CD4-positive, alpha-beta memory T cell (primary cell): ENCODE measurements at regions of chr10 and their contacts with region 1.

Region 1: GRCh38 chr10:67849331-67850011 is 11.5 kb upstream of the DNAJC12 start:
- DNase-seq: peak; percentile 87 to 93 (median 90)
- H3K4me3 ChIP-seq: peak overlapping the region; percentile 70 to 98
- H3K4me3 Mint-ChIP-seq: peak overlapping the region; percentile 90 to 99 (median 96)
- H3K27ac ChIP-seq: peak overlapping the region; percentile 85
- H3K27ac Mint-ChIP-seq: peak overlapping the region; percentile 85 to 99 (median 97)
- H3K4me1 ChIP-seq: peaks cover 8% of the 10 kb centered on the region
- H3K4me1 Mint-ChIP-seq: peaks cover 2 to 17% (median 7%) of the 10 kb centered on the region in 4 donors
- H3K27me3 ChIP-seq: no peaks in the 10 kb centered on the region
- H3K27me3 Mint-ChIP-seq: no peaks in the 10 kb centered on the region

Region 2: DNA sequence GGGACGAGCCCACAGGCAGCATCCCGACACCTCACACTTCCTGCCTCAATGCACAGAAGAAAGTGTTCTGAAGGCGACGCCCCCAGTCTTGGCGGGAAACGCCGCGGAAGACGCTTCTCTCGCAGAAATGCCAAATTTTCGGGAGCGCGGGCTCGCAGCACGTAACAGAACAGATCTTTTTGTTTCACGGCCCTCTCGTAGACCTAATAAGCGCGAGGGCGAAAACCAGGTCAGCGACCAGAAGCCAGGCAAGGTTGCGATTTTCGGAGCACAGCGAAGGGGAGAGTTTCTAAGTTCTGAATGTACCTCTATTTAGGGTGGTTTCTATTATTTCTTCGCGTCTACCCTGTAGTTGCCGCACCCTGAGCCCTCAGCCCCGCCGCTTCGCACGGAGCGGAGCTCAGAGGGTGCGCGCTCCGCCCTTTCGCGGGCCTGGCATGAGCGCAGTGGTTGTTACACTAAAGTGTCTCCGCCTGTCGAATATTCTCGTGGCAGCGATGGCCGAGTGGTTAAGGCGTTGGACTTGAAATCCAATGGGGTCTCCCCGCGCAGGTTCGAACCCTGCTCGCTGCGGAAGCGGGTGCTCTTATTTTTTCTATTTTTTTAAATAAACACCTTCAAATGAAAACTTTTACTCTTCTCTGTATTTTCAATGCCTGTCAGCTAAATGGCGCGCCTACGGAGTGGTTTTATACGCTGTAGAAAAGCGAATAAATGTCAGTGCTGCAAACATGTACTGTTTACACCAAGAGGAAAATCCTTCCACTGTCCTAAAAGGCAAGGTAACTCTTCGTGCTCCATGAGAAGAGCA is 85.3 kb before region 1 on chr10:
- CTCF ChIA-PET with region 1: no interaction called
- POLR2A ChIA-PET with region 1: interaction called, 7 read pairs
- intact Hi-C with region 1: loop called (anchors 1 kb)
- DNase-seq: peak; percentile 96 to 99 (median 97)
- H3K4me3 ChIP-seq: peak overlapping the region; percentile 58 to 98
- H3K4me3 Mint-ChIP-seq: peak overlapping the region; percentile 90 to 98 (median 95)
- H3K27ac ChIP-seq: peak overlapping the region; percentile 73
- H3K27ac Mint-ChIP-seq: peak overlapping the region; percentile 98 to 100 (median 99)
- H3K4me1 ChIP-seq: peaks cover 14% of the 10 kb centered on the region
- H3K4me1 Mint-ChIP-seq: peaks cover 9 to 28% (median 14%) of the 10 kb centered on the region in 4 donors
- H3K27me3 ChIP-seq: no peaks in the 10 kb centered on the region
- H3K27me3 Mint-ChIP-seq: peaks cover 4 to 9% of the 10 kb centered on the region in 2 donors

Region 3: GRCh38 chr10:67903581-67903980 is 54.1 kb after region 1 on chr10:
- CTCF ChIA-PET with region 1: no interaction called
- POLR2A ChIA-PET with region 1: no interaction called
- intact Hi-C with region 1: no loop called
- DNase-seq: no peak
- H3K4me3 ChIP-seq: no peak overlapping the region
- H3K4me3 Mint-ChIP-seq: no peak overlapping the region
- H3K27ac ChIP-seq: no peak overlapping the region
- H3K27ac Mint-ChIP-seq: peak overlapping the region in 1 of 7 donors; percentile 78
- H3K4me1 ChIP-seq: no peaks in the 10 kb centered on the region
- H3K4me1 Mint-ChIP-seq: peaks cover 13 to 33% (median 21%) of the 10 kb centered on the region in 4 donors
- H3K27me3 ChIP-seq: no peaks in the 10 kb centered on the region
- H3K27me3 Mint-ChIP-seq: no peaks in the 10 kb centered on the region

Region 4: GRCh38 chr10:68074775-68075549 is 225.5 kb after region 1 on chr10 and contains the start of gene HERC4:
- CTCF ChIA-PET with region 1: no interaction called
- POLR2A ChIA-PET with region 1: interaction called, 3 read pairs
- intact Hi-C with region 1: loop called (anchors 1 kb)
- DNase-seq: peak; percentile 88 to 92 (median 89)
- H3K4me3 ChIP-seq: peak within 1 kb of the TSS; percentile 53 to 99
- H3K4me3 Mint-ChIP-seq: peak within 1 kb of the TSS; percentile 95 to 99 (median 98)
- H3K27ac ChIP-seq: peak within 1 kb of the TSS; percentile 98
- H3K27ac Mint-ChIP-seq: peak within 1 kb of the TSS; percentile 91 to 98 (median 95)
- H3K4me1 ChIP-seq: peaks cover 39% of the 10 kb centered on the region
- H3K4me1 Mint-ChIP-seq: peaks cover 30 to 48% (median 39%) of the 10 kb centered on the region in 4 donors
- H3K27me3 ChIP-seq: no peaks in the 10 kb centered on the region
- H3K27me3 Mint-ChIP-seq: no peaks in the 10 kb centered on the region
- total RNA-seq, gene HERC4: 104 to 117 TPM

Region 5: DNA sequence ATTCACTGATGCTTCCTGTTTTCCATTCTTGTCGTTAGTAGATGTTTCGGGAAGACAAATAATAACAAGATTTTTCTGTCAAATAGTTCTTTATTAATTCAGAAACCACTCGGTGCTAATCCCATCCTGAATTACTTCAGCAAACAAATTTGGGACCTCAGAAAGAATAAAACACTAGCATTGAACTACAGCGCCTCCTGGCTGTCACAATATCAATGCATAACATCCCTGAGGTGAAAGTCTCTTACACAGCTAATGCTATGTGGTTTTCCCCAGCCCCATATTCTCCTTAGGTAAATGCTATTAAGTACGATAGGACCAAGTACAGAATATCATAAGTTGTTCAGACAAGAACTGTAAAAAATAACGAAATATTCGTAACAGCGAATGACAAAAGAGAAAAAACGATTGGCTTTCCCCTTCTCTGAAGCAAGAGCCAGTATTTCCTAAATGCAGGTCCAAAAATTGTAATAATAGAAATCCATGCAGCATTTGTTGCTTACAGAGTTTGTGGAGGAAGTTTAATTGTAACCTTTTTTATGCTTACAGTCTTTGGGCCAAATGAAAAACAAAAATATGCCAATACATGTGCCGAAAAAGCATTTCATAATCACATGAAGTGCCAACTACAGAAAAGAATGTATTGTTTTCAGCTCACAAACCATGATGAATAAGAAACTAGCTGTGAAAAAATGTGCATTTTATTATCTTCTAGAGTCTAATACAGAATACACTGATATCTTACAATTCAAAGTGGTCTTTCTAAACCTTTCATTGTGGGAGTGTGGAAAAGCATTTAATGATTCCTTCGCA is 307.1 kb after region 1 on chr10:
- CTCF ChIA-PET with region 1: interaction called, 190 read pairs
- POLR2A ChIA-PET with region 1: interaction called, 5 read pairs
- intact Hi-C with region 1: no loop called
- DNase-seq: peak; percentile 51 to 55 (median 53)
- H3K4me3 ChIP-seq: no peak overlapping the region
- H3K4me3 Mint-ChIP-seq: no peak overlapping the region
- H3K27ac ChIP-seq: no peak overlapping the region
- H3K27ac Mint-ChIP-seq: no peak overlapping the region
- H3K4me1 ChIP-seq: no peaks in the 10 kb centered on the region
- H3K4me1 Mint-ChIP-seq: peaks cover 0 to 1% (median 0%) of the 10 kb centered on the region in 4 donors
- H3K27me3 ChIP-seq: no peaks in the 10 kb centered on the region
- H3K27me3 Mint-ChIP-seq: peaks cover 0 to 7% of the 10 kb centered on the region in 2 donors

Region 6: DNA sequence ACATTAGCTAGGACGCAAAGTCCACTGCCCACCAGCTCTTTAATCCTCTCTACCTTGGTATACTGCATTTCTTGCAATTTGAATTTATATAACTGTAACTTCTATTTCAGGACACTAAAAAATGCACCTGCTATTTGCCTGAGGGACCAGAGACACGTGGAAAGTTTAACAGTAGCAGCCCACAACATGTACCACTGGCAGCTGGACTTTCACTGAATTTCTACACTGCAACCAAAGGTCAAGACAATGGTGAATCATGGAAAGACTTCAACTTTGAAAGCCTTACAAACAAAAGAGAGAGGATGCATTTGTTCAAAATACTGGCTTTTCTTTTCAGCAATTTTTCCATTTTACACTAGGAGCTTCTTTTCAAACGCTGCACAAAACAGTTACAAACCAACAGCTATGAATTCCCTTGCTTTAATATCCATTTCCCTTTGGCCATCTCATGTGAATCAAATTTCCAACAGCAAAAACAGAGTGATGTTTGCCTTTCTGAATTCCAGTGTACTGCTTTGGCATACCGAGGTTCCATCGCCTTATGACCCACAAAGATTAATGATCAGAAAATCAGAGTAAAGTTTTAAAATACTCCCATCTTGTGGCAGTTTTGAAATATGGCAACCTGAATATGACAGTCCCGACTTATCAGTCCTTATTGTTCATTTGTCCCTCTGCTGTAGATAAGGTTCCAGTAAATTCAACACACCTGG is 452.5 kb after region 1 on chr10:
- CTCF ChIA-PET with region 1: interaction called, 27 read pairs
- POLR2A ChIA-PET with region 1: no interaction called
- intact Hi-C with region 1: no loop called
- DNase-seq: peak in 4 of 5 donors; percentile 16 to 29 (median 24)
- H3K4me3 ChIP-seq: no peak overlapping the region
- H3K4me3 Mint-ChIP-seq: no peak overlapping the region
- H3K27ac ChIP-seq: no peak overlapping the region
- H3K27ac Mint-ChIP-seq: no peak overlapping the region
- H3K4me1 ChIP-seq: no peaks in the 10 kb centered on the region
- H3K4me1 Mint-ChIP-seq: peaks cover 0 to 1% (median 0%) of the 10 kb centered on the region in 4 donors
- H3K27me3 ChIP-seq: no peaks in the 10 kb centered on the region
- H3K27me3 Mint-ChIP-seq: no peaks in the 10 kb centered on the region

Region 7: DNA sequence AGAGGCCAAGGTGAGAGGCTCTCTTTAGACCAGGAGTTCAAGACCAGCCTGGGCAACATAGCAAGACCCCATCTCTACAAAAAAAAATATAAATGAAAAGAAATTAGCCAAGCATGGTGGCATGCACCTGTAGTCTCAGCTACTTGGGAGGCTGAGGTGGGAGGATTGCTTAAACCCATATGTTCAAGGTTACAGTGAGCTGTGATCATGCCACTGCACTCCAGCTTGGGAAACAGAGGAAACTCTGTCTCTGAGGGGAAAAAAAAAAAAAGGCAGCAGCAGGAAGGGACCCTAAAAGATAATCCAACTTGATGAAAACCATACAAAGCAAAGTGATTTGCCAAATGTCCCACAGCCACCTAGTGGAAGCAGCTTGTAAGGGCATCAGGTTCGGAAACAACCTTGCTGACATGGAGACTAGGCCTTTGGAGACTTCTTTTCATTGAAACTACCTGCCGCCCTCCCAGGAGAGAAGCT is 498.8 kb after region 1 on chr10:
- CTCF ChIA-PET with region 1: interaction called, 10 read pairs
- POLR2A ChIA-PET with region 1: no interaction called
- intact Hi-C with region 1: no loop called
- DNase-seq: peak; percentile 42 to 58 (median 49)
- H3K4me3 ChIP-seq: no peak overlapping the region
- H3K4me3 Mint-ChIP-seq: no peak overlapping the region
- H3K27ac ChIP-seq: no peak overlapping the region
- H3K27ac Mint-ChIP-seq: peak overlapping the region; percentile 4 to 85 (median 79)
- H3K4me1 ChIP-seq: no peaks in the 10 kb centered on the region
- H3K4me1 Mint-ChIP-seq: peaks cover 2 to 8% (median 5%) of the 10 kb centered on the region in 4 donors
- H3K27me3 ChIP-seq: no peaks in the 10 kb centered on the region
- H3K27me3 Mint-ChIP-seq: no peaks in the 10 kb centered on the region

Region 8: GRCh38 chr10:68901104-68901927 is 1051.8 kb after region 1 on chr10 and contains the start of gene DDX50:
- CTCF ChIA-PET with region 1: no interaction called
- POLR2A ChIA-PET with region 1: no interaction called
- intact Hi-C with region 1: loop called (anchors 1 kb)
- DNase-seq: peak; percentile 94 to 98 (median 96)
- H3K4me3 ChIP-seq: peak within 1 kb of the TSS; percentile 58 to 85
- H3K4me3 Mint-ChIP-seq: peak within 1 kb of the TSS; percentile 97 to 99 (median 98)
- H3K27ac ChIP-seq: peak within 1 kb of the TSS; percentile 97
- H3K27ac Mint-ChIP-seq: peak within 1 kb of the TSS; percentile 99 to 100 (median 99)
- H3K4me1 ChIP-seq: peaks cover 37% of the 10 kb centered on the region
- H3K4me1 Mint-ChIP-seq: peaks cover 25 to 61% (median 40%) of the 10 kb centered on the region in 4 donors
- H3K27me3 ChIP-seq: no peaks in the 10 kb centered on the region
- H3K27me3 Mint-ChIP-seq: no peaks in the 10 kb centered on the region
- total RNA-seq, gene DDX50: 41.1 to 41.9 TPM